GM10248 (cell line): ENCODE measurements at regions of chr3 and their contacts with region 1.

Region 1: GRCh38 chr3:167734498-167735232 is at the start of gene PDCD10:
- DNase-seq: peak; percentile 90
- CTCF ChIP-seq: no peak

Region 2: DNA sequence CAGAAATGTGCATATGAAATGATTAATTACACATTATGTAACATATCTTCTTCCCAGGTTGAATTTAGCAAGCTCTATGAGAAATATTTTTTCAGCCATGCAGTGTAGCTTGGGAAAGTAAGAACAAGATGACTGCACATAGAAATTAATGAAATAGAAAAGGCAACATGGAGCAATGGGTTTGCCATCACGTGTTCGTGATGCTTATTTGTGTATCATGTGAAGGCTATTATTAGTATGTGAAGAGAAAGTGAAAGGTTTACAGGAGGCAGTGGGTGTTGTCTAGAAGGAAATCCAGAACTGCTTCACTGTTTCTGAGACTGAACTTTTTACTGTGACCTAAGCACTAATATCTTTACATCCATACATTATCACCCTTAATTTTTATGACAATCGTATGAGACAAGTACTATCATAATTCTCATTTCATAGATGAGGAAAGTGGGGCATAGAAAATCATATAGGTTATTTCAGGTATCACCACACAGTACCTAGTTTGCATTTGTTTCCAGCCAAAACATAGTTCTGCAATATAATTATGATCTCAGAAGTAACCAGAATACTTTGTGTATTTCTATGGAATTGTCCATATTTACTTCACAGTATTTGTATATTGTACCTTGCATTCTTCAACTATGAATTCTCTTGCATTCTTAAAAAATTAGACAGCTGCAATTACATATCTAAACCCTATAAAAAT is 15.8 kb after region 1 on chr3:
- CTCF ChIA-PET with region 1: interaction called, 23 read pairs
- POLR2A ChIA-PET with region 1: interaction called, 3 read pairs
- DNase-seq: peak; percentile 51
- CTCF ChIP-seq: no peak